ENCODE measurements at regions of chr18 and their contacts with region 1.

Region 1: DNA sequence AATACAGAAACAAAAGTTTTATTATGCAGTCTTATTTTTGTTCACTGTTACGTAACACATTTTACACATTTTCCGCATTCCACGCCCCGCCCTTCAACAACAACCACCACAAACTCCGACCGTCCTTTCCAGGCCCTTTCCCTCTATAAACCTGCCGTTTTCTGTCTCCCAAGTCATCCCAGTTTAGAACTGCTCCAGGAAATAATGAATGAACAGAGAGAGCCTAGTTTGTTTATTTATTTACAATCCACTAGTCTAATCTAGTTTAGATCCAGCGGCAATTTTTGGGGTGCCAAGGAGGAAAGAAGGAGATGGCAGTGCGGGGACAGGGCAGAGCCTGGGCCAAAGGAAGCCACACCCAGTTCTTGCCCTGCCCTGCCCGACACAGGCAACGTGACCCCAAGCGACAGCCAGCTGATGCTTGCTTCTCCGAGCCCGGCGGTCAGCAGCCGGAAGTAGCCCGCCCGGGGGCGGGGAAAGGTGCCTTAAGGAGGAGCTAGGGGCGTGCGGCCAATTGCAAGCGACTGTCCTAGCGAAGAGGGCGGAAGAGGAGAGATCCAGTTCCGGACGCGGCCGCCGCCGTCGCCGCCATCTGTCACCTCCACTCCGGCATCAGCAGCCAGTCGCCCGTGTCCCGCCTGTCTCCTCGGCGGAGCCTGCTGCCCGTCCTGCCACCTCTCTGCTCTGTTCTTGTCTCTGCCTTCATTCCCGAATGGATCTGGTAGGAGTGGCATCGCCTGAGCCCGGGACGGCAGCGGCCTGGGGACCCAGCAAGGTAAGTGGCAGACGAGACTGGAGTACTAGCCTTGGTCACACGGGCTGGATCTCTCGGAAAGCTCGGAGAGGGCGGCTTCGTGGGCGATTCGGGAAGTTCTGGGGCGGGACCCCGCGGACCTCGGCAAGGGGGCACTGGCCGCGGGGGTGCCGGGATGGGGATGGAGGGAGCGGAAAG is at the start of gene RIOK3:
- DNase-seq: peak; percentile 92
- ATAC-seq: peak; percentile 94 to 99 (median 97)
- H3K4me3 ChIP-seq: peak within 1 kb of the TSS; percentile 85
- H3K4me3 Mint-ChIP-seq: peak within 1 kb of the TSS; percentile 98
- H3K27ac ChIP-seq: peak within 1 kb of the TSS; percentile 81
- H3K27ac Mint-ChIP-seq: peak within 1 kb of the TSS; percentile 86 to 91
- H3K4me1 ChIP-seq: peaks cover 10% of the 10 kb centered on the region
- H3K4me1 Mint-ChIP-seq: peaks cover 39 to 47% of the 10 kb centered on the region in 2 donors
- H3K27me3 ChIP-seq: no peaks in the 10 kb centered on the region
- H3K27me3 Mint-ChIP-seq: no peaks in the 10 kb centered on the region
- CTCF ChIP-seq: no peak
- total RNA-seq, gene RIOK3: 164 to 233 (median 182) TPM

Region 2: GRCh38 chr18:22899421-22899820 is 553.6 kb before region 1 on chr18:
- intact Hi-C with region 1: no loop called
- DNase-seq: no peak
- ATAC-seq: no peak
- H3K4me3 ChIP-seq: no peak overlapping the region
- H3K4me3 Mint-ChIP-seq: no peak overlapping the region
- H3K27ac ChIP-seq: no peak overlapping the region
- H3K27ac Mint-ChIP-seq: no peak overlapping the region
- H3K4me1 ChIP-seq: no peaks in the 10 kb centered on the region
- H3K4me1 Mint-ChIP-seq: no peaks in the 10 kb centered on the region
- H3K27me3 ChIP-seq: no peaks in the 10 kb centered on the region
- H3K27me3 Mint-ChIP-seq: peaks cover 0 to 6% of the 10 kb centered on the region in 2 donors
- CTCF ChIP-seq: no peak

Region 3: GRCh38 chr18:23437357-23438045 is 15.5 kb before region 1 on chr18:
- intact Hi-C with region 1: loop called (anchors 1 kb)
- DNase-seq: peak; percentile 73 to 78
- ATAC-seq: peak; percentile 96 to 100 (median 98)
- H3K4me3 ChIP-seq: peak overlapping the region; percentile 97
- H3K4me3 Mint-ChIP-seq: peak overlapping the region; percentile 90
- H3K27ac ChIP-seq: peak overlapping the region; percentile 31
- H3K27ac Mint-ChIP-seq: peak overlapping the region in 1 of 2 donors; percentile 85
- H3K4me1 ChIP-seq: peaks cover 18% of the 10 kb centered on the region
- H3K4me1 Mint-ChIP-seq: peaks cover 7 to 15% of the 10 kb centered on the region in 2 donors
- H3K27me3 ChIP-seq: no peaks in the 10 kb centered on the region
- H3K27me3 Mint-ChIP-seq: no peaks in the 10 kb centered on the region
- CTCF ChIP-seq: no peak